Stomach (tissue), 19 donors: ENCODE measurements at regions of chr17 and their contacts with region 1.

Region 1: GRCh38 chr17:36611345-36612072 is 10.1 kb downstream of the MRM1 start:
- DNase-seq: no peak
- H3K4me3 ChIP-seq: no peak overlapping the region
- H3K27ac ChIP-seq: no peak overlapping the region
- H3K4me1 ChIP-seq: peaks cover 0 to 10% (median 6%) of the 10 kb centered on the region in 4 donors
- H3K27me3 ChIP-seq: peaks cover 0 to 36% (median 0%) of the 10 kb centered on the region in 3 donors
- CTCF ChIP-seq: no peak
- EP300 ChIP-seq: no peak
- POLR2A ChIP-seq: no peak

Region 2: DNA sequence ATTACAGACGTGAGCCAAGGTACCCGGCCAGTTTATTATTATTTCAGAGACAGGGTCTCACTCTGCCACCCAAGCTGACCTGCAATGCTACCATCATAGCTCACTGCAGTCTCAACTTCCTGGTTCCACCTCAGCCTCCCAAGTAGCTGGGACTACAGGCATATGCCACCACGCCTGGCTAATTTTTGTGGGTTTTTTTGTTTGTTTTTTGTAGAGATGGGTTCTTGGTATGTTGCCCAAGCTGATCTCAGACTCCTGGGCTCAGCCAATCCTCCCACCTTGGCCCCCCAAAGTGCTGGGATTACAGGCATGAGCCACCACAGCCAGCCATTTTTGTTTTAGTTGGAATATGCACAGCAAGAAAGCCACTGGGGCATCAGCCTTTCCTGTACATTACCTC is 105.6 kb after region 1 on chr17:
- intact Hi-C with region 1: no loop called
- DNase-seq: no peak
- H3K4me3 ChIP-seq: no peak overlapping the region
- H3K27ac ChIP-seq: no peak overlapping the region
- H3K4me1 ChIP-seq: peaks cover 4 to 5% (median 4%) of the 10 kb centered on the region in 4 donors
- H3K27me3 ChIP-seq: peaks cover 0 to 33% (median under 1%) of the 10 kb centered on the region in 3 donors
- CTCF ChIP-seq: no peak
- EP300 ChIP-seq: no peak
- POLR2A ChIP-seq: no peak

Region 3: GRCh38 chr17:36950029-36950428 is 338.5 kb after region 1 on chr17:
- intact Hi-C with region 1: loop called (anchors 10 kb)
- DNase-seq: peak in 1 of 2 donors; percentile 6
- H3K4me3 ChIP-seq: peak overlapping the region in 3 of 4 donors; percentile 80 to 93 (median 80)
- H3K27ac ChIP-seq: peak overlapping the region in 2 of 5 donors; percentile 92 to 94
- H3K4me1 ChIP-seq: peaks cover 16 to 40% (median 30%) of the 10 kb centered on the region in 4 donors
- H3K27me3 ChIP-seq: peaks cover 18 to 30% (median 27%) of the 10 kb centered on the region in 3 donors
- CTCF ChIP-seq: no peak
- EP300 ChIP-seq: no peak
- POLR2A ChIP-seq: no peak